ENCODE measurements at regions of chr14 and their contacts with region 1.

Region 1: DNA sequence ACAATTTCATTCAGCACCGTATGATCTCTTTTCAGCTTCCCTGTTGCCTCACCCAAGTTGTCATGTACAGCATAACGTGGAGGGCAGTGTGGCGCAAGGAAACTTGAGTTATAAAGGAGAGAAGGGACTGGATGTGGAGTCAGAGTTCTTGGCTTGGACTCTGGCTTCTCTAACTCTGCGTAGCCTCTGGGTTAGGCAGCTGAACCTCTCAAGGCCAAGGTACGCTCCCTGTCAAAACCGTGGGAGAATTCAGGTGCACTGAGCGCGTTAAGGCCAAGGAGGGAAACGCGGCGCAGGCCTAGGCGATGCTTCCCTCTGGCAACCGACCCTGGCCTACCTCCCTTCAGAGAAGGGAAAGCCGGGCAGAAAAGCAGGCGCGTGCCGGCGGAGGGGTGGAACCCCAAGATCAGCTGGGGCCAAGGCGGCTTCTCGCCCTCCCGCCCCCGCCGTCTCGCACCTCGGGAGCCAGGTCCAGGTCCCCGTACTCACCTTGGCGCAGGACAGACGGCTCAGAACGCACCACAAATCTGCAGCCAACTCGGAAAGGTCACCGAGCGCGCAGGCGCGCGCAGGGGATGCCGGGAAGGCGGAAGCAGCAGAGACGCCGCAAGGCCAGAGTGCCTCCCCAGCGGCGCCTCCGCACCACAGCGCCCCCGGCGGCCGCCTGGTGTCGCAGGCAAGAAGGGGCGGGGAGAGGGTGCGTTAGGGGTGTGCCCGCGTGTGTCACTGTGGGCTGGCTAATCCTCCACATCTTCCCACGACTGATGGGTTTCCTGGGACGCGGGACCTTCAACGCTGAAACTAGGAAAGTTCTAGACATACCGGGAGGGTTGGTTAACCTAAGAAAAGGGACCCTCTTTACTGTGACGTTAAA is 7.0 kb upstream of the TDRD9 start:
- DNase-seq: peak; percentile 95
- H3K4me3 Mint-ChIP-seq: peak overlapping the region; percentile 96
- H3K27ac Mint-ChIP-seq: peak overlapping the region; percentile 81
- H3K4me1 Mint-ChIP-seq: peaks cover 5% of the 10 kb centered on the region
- H3K27me3 Mint-ChIP-seq: peaks cover 12% of the 10 kb centered on the region

Region 2: GRCh38 chr14:103562429-103563225 is 358.6 kb before region 1 on chr14 and contains the starts of genes BAG5 and COA8:
- intact Hi-C with region 1: loop called (anchors 5 kb)
- DNase-seq: peak; percentile 83
- H3K4me3 Mint-ChIP-seq: peak within 1 kb of the TSS; percentile 96
- H3K27ac Mint-ChIP-seq: peak within 1 kb of the TSS; percentile 94
- H3K4me1 Mint-ChIP-seq: peaks cover 29% of the 10 kb centered on the region
- H3K27me3 Mint-ChIP-seq: no peaks in the 10 kb centered on the region
- total RNA-seq, gene BAG5: 33.8 and 34.1 TPM in 2 replicates
- total RNA-seq, gene COA8: 37.2 and 39.7 TPM in 2 replicates

Region 3: GRCh38 chr14:103715052-103716000 is 205.9 kb before region 1 on chr14 and contains the starts of genes XRCC3 and ZFYVE21:
- intact Hi-C with region 1: loop called (anchors 2 kb)
- DNase-seq: peak; percentile 100
- H3K4me3 Mint-ChIP-seq: peak within 1 kb of the TSS; percentile 93
- H3K27ac Mint-ChIP-seq: peak within 1 kb of the TSS; percentile 93
- H3K4me1 Mint-ChIP-seq: peaks cover 48% of the 10 kb centered on the region
- H3K27me3 Mint-ChIP-seq: no peaks in the 10 kb centered on the region
- total RNA-seq, gene XRCC3: 67.1 and 69.5 TPM in 2 replicates
- total RNA-seq, gene ZFYVE21: 21.5 and 24.7 TPM in 2 replicates

Region 4: GRCh38 chr14:103871596-103872480 is 49.4 kb before region 1 on chr14:
- intact Hi-C with region 1: loop called (anchors 1 kb)
- DNase-seq: peak; percentile 68
- H3K4me3 Mint-ChIP-seq: peak overlapping the region; percentile 83
- H3K27ac Mint-ChIP-seq: peak overlapping the region; percentile 80
- H3K4me1 Mint-ChIP-seq: peaks cover 5% of the 10 kb centered on the region
- H3K27me3 Mint-ChIP-seq: no peaks in the 10 kb centered on the region

Region 5: GRCh38 chr14:103984196-103984595 is 63.0 kb after region 1 on chr14:
- intact Hi-C with region 1: no loop called
- DNase-seq: no peak
- H3K4me3 Mint-ChIP-seq: no peak overlapping the region
- H3K27ac Mint-ChIP-seq: no peak overlapping the region
- H3K4me1 Mint-ChIP-seq: no peaks in the 10 kb centered on the region
- H3K27me3 Mint-ChIP-seq: peaks cover 16% of the 10 kb centered on the region

Region 6: GRCh38 chr14:104078031-104078455 is 156.8 kb after region 1 on chr14:
- intact Hi-C with region 1: loop called (anchors 1 kb)
- DNase-seq: peak; percentile 78
- H3K4me3 Mint-ChIP-seq: no peak overlapping the region
- H3K27ac Mint-ChIP-seq: no peak overlapping the region
- H3K4me1 Mint-ChIP-seq: no peaks in the 10 kb centered on the region
- H3K27me3 Mint-ChIP-seq: no peaks in the 10 kb centered on the region